ENCODE measurements at regions of chr15 and their contacts with region 1.

Region 1: GRCh38 chr15:96330450-96331145 is at the start of gene NR2F2:
- DNase-seq: peak; percentile 99
- H3K4me3 ChIP-seq: peak within 1 kb of the TSS; percentile 94
- H3K27ac ChIP-seq: peak within 1 kb of the TSS; percentile 92
- H3K27me3 ChIP-seq: no peaks in the 10 kb centered on the region
- CTCF ChIP-seq: no peak

Region 2: GRCh38 chr15:95025924-95026728 is 1304.5 kb before region 1 on chr15:
- in situ Hi-C with region 1: loop called (anchors 25 kb)
- DNase-seq: peak; percentile 84
- H3K4me3 ChIP-seq: no peak overlapping the region
- H3K27ac ChIP-seq: no peak overlapping the region
- H3K27me3 ChIP-seq: no peaks in the 10 kb centered on the region
- CTCF ChIP-seq: peak; percentile 80

Measured in brain microvascular endothelial cell (primary cell).